GM10248 (cell line): ENCODE measurements at regions of chr21 and their contacts with region 1.

Region 1: GRCh38 chr21:34603002-34603709 is 11.8 kb downstream of the RCAN1 start:
- DNase-seq: peak; percentile 78
- CTCF ChIP-seq: peak; percentile 82

Region 2: DNA sequence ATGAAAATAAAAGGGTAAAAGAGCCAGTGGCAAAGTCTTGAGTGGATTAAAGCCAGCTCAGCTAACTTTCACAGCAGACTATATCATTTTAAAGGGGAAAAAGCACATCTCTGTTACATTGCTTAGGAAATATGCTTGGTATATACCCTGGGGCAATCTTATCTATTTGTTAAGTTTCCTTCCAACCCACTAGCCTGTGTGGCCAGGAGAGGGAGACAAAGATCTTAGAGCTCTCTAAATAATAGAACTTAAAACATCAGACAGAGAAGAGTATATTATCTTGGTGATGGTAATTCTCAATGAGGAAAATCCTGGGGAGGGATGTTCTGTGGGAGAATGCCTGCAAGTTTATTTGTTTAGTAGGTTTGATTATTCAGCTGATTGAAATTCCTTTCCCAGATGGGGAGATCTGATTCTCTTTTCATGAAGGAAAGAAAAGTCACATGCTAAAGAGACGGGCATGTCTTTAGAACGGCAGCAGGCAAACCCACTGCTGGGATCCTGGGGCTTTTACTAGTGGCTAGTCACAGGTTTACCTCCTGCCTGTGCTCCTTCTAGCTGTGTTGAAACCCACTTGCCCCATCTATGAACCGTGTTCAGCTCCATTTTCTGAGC is 235.7 kb before region 1 on chr21:
- CTCF ChIA-PET with region 1: interaction called, 20 read pairs
- POLR2A ChIA-PET with region 1: no interaction called
- DNase-seq: peak; percentile 40
- CTCF ChIP-seq: peak; percentile 69

Region 3: GRCh38 chr21:34517491-34518245 is 85.5 kb before region 1 on chr21:
- CTCF ChIA-PET with region 1: interaction called, 33 read pairs
- POLR2A ChIA-PET with region 1: no interaction called
- DNase-seq: no peak
- CTCF ChIP-seq: peak; percentile 19

Region 4: GRCh38 chr21:34576041-34576511 is 27.1 kb before region 1 on chr21:
- CTCF ChIA-PET with region 1: interaction called, 12 read pairs
- POLR2A ChIA-PET with region 1: no interaction called
- DNase-seq: no peak
- CTCF ChIP-seq: no peak

Region 5: GRCh38 chr21:34614633-34615486 is 11.7 kb after region 1 on chr21 and contains the start of gene RCAN1:
- CTCF ChIA-PET with region 1: interaction called, 67 read pairs
- POLR2A ChIA-PET with region 1: no interaction called
- DNase-seq: peak; percentile 94
- CTCF ChIP-seq: no peak

Region 6: DNA sequence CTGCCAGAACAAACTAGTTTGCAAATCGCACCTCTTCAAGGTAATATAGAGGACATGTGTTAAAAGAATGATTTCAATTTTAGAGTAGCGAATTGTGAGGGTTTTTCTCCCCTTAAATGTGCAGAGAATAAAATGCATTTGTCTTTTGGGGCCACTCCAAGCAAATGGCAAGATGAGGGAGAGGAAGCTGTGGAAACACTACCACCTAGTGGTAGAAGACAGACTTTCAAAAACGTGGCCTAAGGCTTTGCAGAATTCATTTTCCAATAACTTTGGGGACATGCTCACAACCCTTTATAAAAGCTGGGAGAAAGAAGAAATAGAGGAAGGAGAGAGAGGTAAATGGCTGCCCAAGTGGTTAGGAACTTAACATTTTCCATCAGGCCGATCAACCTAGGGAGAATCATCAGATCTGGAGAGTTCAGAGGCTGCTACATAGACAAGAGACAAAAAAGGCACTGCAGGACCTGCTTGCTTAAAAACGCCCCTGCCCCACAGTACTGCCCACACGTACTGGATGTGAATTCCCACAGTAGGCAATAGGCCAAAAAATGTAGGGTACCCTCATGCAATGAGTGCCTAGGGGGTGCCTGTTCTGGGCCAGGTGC is 27.5 kb after region 1 on chr21:
- CTCF ChIA-PET with region 1: interaction called, 33 read pairs
- POLR2A ChIA-PET with region 1: no interaction called
- DNase-seq: peak; percentile 70
- CTCF ChIP-seq: peak; percentile 72